ENCODE measurements at regions of chr6 and their contacts with region 1.

Region 1: DNA sequence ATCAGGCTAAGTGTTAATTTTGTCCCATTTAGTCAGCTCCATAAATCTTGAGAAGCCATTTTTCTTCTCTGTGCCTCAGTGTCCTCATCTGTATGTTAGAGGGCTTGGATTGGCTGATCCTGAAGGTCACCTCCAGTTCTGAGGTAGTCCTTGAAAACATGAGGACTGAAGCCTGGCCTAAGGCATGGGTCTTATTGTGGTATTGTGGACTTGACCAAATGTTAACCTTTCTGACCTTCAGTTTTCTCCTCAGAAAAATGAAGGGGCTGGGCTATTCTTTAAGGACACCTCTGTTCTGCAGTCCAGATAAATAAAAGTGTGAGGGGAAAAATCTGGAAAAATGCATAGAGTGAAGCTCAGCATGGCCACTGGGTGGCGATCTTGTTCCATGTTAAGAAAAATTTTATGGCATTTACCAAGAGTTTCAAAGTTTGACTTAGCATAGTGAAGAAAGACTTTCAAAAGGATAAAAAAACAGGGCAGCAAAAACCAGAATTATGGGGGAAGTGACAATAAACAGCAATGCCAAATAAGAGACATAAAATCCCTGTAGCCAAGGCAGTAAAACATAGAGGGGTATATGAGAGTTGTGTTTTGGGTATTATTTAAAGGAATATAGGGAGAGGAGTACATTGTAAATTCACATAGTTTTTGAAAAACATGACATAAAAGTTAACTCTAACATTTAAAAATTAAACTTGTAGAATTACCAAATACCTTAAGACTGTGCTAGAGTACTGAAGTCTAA is 13.2 kb upstream of the TFB1M start:
- DNase-seq: peak; percentile 34 to 76 (median 66)
- ATAC-seq: peak; percentile 80
- H3K4me3 ChIP-seq: no peak overlapping the region
- H3K4me3 Mint-ChIP-seq: peak overlapping the region in 6 of 10 donors; percentile 0 to 40 (median 16)
- H3K27ac ChIP-seq: no peak overlapping the region
- H3K27ac Mint-ChIP-seq: peak overlapping the region; percentile 1 to 68 (median 15)
- H3K4me1 ChIP-seq: peaks cover 0 to 16% of the 10 kb centered on the region in 2 donors
- H3K4me1 Mint-ChIP-seq: peaks cover 3 to 21% (median 19%) of the 10 kb centered on the region in 7 donors
- H3K27me3 ChIP-seq: no peaks in the 10 kb centered on the region
- H3K27me3 Mint-ChIP-seq: no peaks in the 10 kb centered on the region

Region 2: GRCh38 chr6:155449450-155450239 is 122.1 kb after region 1 on chr6:
- CTCF ChIA-PET with region 1: no interaction called
- POLR2A ChIA-PET with region 1: no interaction called
- intact Hi-C with region 1: no loop called
- DNase-seq: peak in 1 of 9 donors; percentile 1
- ATAC-seq: no peak
- H3K4me3 ChIP-seq: no peak overlapping the region
- H3K4me3 Mint-ChIP-seq: peak overlapping the region in 1 of 10 donors; percentile 22
- H3K27ac ChIP-seq: no peak overlapping the region
- H3K27ac Mint-ChIP-seq: no peak overlapping the region
- H3K4me1 ChIP-seq: no peaks in the 10 kb centered on the region
- H3K4me1 Mint-ChIP-seq: peaks cover 0 to 16% (median 11%) of the 10 kb centered on the region in 7 donors
- H3K27me3 ChIP-seq: no peaks in the 10 kb centered on the region
- H3K27me3 Mint-ChIP-seq: peaks cover 0 to 13% (median 2%) of the 10 kb centered on the region in 5 donors

Region 3: GRCh38 chr6:155498370-155498769 is 170.9 kb after region 1 on chr6:
- CTCF ChIA-PET with region 1: no interaction called
- POLR2A ChIA-PET with region 1: no interaction called
- intact Hi-C with region 1: loop called in 1 of 2 experiments (anchors 1 kb)
- DNase-seq: no peak
- ATAC-seq: no peak
- H3K4me3 ChIP-seq: no peak overlapping the region
- H3K4me3 Mint-ChIP-seq: no peak overlapping the region
- H3K27ac ChIP-seq: no peak overlapping the region
- H3K27ac Mint-ChIP-seq: peak overlapping the region in 1 of 9 donors; percentile 31
- H3K4me1 ChIP-seq: no peaks in the 10 kb centered on the region
- H3K4me1 Mint-ChIP-seq: peaks cover 0 to 2% (median 0%) of the 10 kb centered on the region in 7 donors
- H3K27me3 ChIP-seq: no peaks in the 10 kb centered on the region
- H3K27me3 Mint-ChIP-seq: peaks cover 0 to 4% (median 0%) of the 10 kb centered on the region in 5 donors

Region 4: DNA sequence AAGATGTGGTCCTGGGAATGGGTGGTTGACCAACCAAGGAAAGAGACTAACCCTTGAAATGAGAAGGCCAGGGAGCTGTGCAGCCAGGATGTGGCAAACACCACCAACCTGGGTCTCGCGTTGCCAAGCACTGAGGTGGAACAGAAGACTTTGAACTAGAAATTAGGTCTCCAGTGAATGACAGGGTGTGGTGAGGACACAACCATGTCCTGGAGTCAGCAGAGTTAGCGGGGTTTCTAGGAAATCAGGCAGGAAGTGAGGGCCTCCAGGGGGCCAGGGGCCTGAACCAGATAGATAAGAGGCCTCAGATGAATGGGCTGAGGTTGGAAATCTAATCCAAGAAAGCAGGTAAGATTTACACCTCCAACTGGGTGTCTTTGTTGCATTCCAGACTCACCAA is 1096.3 kb after region 1 on chr6:
- CTCF ChIA-PET with region 1: no interaction called
- POLR2A ChIA-PET with region 1: no interaction called
- intact Hi-C with region 1: loop called in 1 of 2 experiments (anchors 5 kb)
- DNase-seq: peak in 6 of 9 donors; percentile 5 to 18 (median 13)
- ATAC-seq: peak; percentile 47
- H3K4me3 ChIP-seq: no peak overlapping the region
- H3K4me3 Mint-ChIP-seq: peak overlapping the region; percentile 12 to 73 (median 50)
- H3K27ac ChIP-seq: no peak overlapping the region
- H3K27ac Mint-ChIP-seq: peak overlapping the region; percentile 34 to 88 (median 75)
- H3K4me1 ChIP-seq: peaks cover 15 to 24% of the 10 kb centered on the region in 2 donors
- H3K4me1 Mint-ChIP-seq: peaks cover 22 to 40% (median 35%) of the 10 kb centered on the region in 7 donors
- H3K27me3 ChIP-seq: no peaks in the 10 kb centered on the region
- H3K27me3 Mint-ChIP-seq: no peaks in the 10 kb centered on the region

Region 5: GRCh38 chr6:156953479-156954146 is 1626.1 kb after region 1 on chr6:
- CTCF ChIA-PET with region 1: no interaction called
- POLR2A ChIA-PET with region 1: no interaction called
- intact Hi-C with region 1: loop called in 1 of 2 experiments (anchors 5 kb)
- DNase-seq: peak in 7 of 9 donors; percentile 67 to 85 (median 82)
- ATAC-seq: peak; percentile 95
- H3K4me3 ChIP-seq: no peak overlapping the region
- H3K4me3 Mint-ChIP-seq: peak overlapping the region in 5 of 10 donors; percentile 10 to 51 (median 37)
- H3K27ac ChIP-seq: no peak overlapping the region
- H3K27ac Mint-ChIP-seq: peak overlapping the region in 8 of 9 donors; percentile 27 to 83 (median 51)
- H3K4me1 ChIP-seq: peaks cover 15 to 20% of the 10 kb centered on the region in 2 donors
- H3K4me1 Mint-ChIP-seq: peaks cover 41 to 84% (median 77%) of the 10 kb centered on the region in 7 donors
- H3K27me3 ChIP-seq: no peaks in the 10 kb centered on the region
- H3K27me3 Mint-ChIP-seq: no peaks in the 10 kb centered on the region